CD4-positive, alpha-beta memory T cell (primary cell): ENCODE measurements at regions of chr10 and their contacts with region 1.

Region 1: DNA sequence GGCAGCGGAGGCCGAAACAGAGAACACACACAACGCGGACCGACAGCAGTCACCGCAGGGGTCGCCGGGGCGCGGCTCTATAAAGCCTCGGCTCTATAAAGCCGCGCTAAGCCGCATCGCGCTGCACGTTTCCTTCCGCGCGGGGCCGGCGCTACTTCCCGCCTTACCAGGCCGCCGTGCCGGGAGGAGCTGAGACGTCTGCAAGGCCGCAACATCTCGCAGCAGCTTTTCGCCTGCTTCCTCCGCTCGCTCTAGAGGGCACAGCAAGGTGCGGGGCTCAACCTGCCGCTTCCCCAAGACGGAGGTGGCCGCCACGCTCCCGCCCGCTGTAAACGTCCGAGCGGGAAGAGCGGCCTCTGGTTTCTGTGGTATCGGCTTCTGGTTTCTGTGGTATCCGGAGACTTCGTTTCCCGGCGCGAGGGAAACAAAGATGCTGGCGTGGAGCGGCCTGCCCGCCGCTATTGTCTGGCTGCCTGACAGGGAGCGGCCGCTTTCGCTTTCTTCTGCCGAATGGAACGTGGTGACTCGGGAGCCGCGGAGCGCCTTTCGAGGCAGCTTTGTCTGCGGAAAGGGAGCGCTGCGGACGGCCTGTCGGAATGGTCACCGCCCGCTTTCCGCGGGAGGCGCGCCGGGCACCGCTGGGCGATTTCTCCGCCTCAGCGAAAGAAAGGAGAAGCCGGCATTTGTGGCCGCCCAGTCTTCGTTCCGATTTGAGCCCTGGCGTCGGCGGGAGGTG is 91.8 kb downstream of the SPAG6 start:
- DNase-seq: peak; percentile 89 to 90 (median 89)
- H3K4me3 ChIP-seq: peak overlapping the region; percentile 82 to 87
- H3K4me3 Mint-ChIP-seq: peak overlapping the region; percentile 92 to 97 (median 96)
- H3K27ac ChIP-seq: peak overlapping the region; percentile 90
- H3K27ac Mint-ChIP-seq: peak overlapping the region; percentile 96 to 99 (median 98)
- H3K4me1 ChIP-seq: peaks cover 15% of the 10 kb centered on the region
- H3K4me1 Mint-ChIP-seq: peaks cover 24 to 53% (median 28%) of the 10 kb centered on the region in 4 donors
- H3K27me3 ChIP-seq: no peaks in the 10 kb centered on the region
- H3K27me3 Mint-ChIP-seq: no peaks in the 10 kb centered on the region

Region 2: GRCh38 chr10:21525367-21526183 is 911.5 kb before region 1 on chr10 and contains the start of gene SKIDA1:
- CTCF ChIA-PET with region 1: no interaction called
- POLR2A ChIA-PET with region 1: interaction called, 14 read pairs
- intact Hi-C with region 1: no loop called
- DNase-seq: peak; percentile 69 to 81 (median 75)
- H3K4me3 ChIP-seq: peak within 1 kb of the TSS; percentile 55 to 78
- H3K4me3 Mint-ChIP-seq: peak within 1 kb of the TSS; percentile 93 to 99 (median 96)
- H3K27ac ChIP-seq: peak within 1 kb of the TSS; percentile 63
- H3K27ac Mint-ChIP-seq: peak within 1 kb of the TSS; percentile 84 to 98 (median 98)
- H3K4me1 ChIP-seq: peaks cover 23% of the 10 kb centered on the region
- H3K4me1 Mint-ChIP-seq: peaks cover 9 to 36% (median 21%) of the 10 kb centered on the region in 4 donors
- H3K27me3 ChIP-seq: peaks cover 7% of the 10 kb centered on the region
- H3K27me3 Mint-ChIP-seq: peaks cover 9 to 12% of the 10 kb centered on the region in 2 donors
- total RNA-seq, gene SKIDA1: 0.39 to 0.73 TPM

Region 3: GRCh38 chr10:22010973-22011408 is 426.1 kb before region 1 on chr10:
- CTCF ChIA-PET with region 1: interaction called, 3 read pairs
- POLR2A ChIA-PET with region 1: interaction called, 13 read pairs
- intact Hi-C with region 1: no loop called
- DNase-seq: peak in 4 of 5 donors; percentile 38 to 51 (median 44)
- H3K4me3 ChIP-seq: no peak overlapping the region
- H3K4me3 Mint-ChIP-seq: no peak overlapping the region
- H3K27ac ChIP-seq: no peak overlapping the region
- H3K27ac Mint-ChIP-seq: no peak overlapping the region
- H3K4me1 ChIP-seq: no peaks in the 10 kb centered on the region
- H3K4me1 Mint-ChIP-seq: peaks cover 0 to 4% (median under 1%) of the 10 kb centered on the region in 4 donors
- H3K27me3 ChIP-seq: no peaks in the 10 kb centered on the region
- H3K27me3 Mint-ChIP-seq: peaks cover 5 to 7% of the 10 kb centered on the region in 2 donors

Region 4: DNA sequence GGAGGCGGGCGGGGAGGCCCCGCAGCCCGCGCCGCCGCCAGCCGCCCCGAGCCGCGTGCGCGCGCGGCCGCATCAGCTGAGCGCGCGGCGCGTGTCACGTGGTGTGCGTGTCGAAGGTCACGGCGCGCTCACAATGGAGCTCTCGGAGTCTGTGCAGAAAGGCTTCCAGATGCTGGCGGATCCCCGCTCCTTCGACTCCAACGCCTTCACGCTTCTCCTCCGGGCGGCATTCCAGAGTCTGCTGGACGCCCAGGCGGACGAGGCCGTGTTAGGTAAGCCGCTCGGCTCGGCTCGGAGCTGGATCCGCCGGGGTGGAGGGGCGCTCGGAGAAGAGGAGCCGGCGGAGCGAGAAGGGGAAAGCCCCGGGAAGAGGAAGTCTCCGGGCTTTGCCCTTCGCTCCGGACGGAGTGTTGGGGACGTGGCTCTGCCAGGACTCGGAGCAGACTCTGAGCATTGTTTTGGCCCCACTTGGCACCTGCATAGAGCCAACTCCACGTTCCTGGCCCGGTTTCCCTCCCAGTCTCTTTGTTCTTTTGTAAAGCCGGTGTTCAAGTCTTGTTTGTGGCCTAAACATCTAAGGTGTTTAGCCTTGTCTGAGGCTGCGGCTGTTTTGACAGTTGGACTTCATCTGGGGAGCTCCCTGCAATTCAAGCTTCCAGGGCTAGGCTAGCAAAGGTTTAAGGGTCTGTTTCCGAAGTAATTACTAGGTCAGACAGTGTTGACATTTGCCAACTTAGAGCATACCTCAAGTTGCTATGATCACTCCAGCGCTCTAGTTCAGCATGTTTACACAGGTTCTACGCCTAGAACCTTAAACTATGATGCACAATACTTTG is 120.5 kb before region 1 on chr10 and contains the start of gene COMMD3:
- CTCF ChIA-PET with region 1: interaction called, 6 read pairs
- POLR2A ChIA-PET with region 1: interaction called, 97 read pairs
- intact Hi-C with region 1: loop called (anchors 1 kb)
- DNase-seq: peak; percentile 78 to 86 (median 82)
- H3K4me3 ChIP-seq: peak within 1 kb of the TSS; percentile 77 to 95
- H3K4me3 Mint-ChIP-seq: peak within 1 kb of the TSS; percentile 94 to 99 (median 98)
- H3K27ac ChIP-seq: peak within 1 kb of the TSS; percentile 71
- H3K27ac Mint-ChIP-seq: peak within 1 kb of the TSS; percentile 89 to 98 (median 98)
- H3K4me1 ChIP-seq: peaks cover 37% of the 10 kb centered on the region
- H3K4me1 Mint-ChIP-seq: peaks cover 22 to 50% (median 29%) of the 10 kb centered on the region in 4 donors
- H3K27me3 ChIP-seq: no peaks in the 10 kb centered on the region
- H3K27me3 Mint-ChIP-seq: peaks cover 3 to 4% of the 10 kb centered on the region in 2 donors
- total RNA-seq, gene COMMD3: 67.9 to 68.5 TPM

Region 5: GRCh38 chr10:22379059-22379458 is 58.0 kb before region 1 on chr10:
- CTCF ChIA-PET with region 1: no interaction called
- POLR2A ChIA-PET with region 1: no interaction called
- intact Hi-C with region 1: no loop called
- DNase-seq: no peak
- H3K4me3 ChIP-seq: no peak overlapping the region
- H3K4me3 Mint-ChIP-seq: no peak overlapping the region
- H3K27ac ChIP-seq: no peak overlapping the region
- H3K27ac Mint-ChIP-seq: no peak overlapping the region
- H3K4me1 ChIP-seq: no peaks in the 10 kb centered on the region
- H3K4me1 Mint-ChIP-seq: peaks cover 0 to 4% (median 0%) of the 10 kb centered on the region in 4 donors
- H3K27me3 ChIP-seq: no peaks in the 10 kb centered on the region
- H3K27me3 Mint-ChIP-seq: peaks cover 5 to 14% of the 10 kb centered on the region in 2 donors

Region 6: DNA sequence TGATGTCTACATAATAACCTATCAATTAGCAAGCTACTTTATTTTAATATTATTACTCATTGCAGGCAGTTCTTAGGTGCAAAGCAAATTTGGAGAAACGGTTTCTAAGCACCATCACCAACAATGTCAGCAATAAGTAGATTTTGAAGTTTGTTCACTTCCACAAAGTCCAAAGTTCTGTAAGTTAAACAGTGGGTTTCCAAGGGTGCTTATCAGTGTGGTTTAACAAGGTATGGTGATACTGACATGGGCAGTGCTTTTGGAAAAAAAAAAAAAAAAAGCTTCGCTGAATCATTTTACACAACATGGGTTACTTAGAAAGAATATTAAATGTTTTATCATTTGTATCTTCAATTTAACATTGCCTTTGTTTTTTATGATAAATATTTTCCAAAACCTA is 10.0 kb after region 1 on chr10:
- CTCF ChIA-PET with region 1: no interaction called
- POLR2A ChIA-PET with region 1: interaction called, 20 read pairs
- intact Hi-C with region 1: no loop called
- DNase-seq: no peak
- H3K4me3 ChIP-seq: no peak overlapping the region
- H3K4me3 Mint-ChIP-seq: no peak overlapping the region
- H3K27ac ChIP-seq: no peak overlapping the region
- H3K27ac Mint-ChIP-seq: no peak overlapping the region
- H3K4me1 ChIP-seq: no peaks in the 10 kb centered on the region
- H3K4me1 Mint-ChIP-seq: no peaks in the 10 kb centered on the region
- H3K27me3 ChIP-seq: no peaks in the 10 kb centered on the region
- H3K27me3 Mint-ChIP-seq: peaks cover 6 to 16% of the 10 kb centered on the region in 2 donors

Region 7: DNA sequence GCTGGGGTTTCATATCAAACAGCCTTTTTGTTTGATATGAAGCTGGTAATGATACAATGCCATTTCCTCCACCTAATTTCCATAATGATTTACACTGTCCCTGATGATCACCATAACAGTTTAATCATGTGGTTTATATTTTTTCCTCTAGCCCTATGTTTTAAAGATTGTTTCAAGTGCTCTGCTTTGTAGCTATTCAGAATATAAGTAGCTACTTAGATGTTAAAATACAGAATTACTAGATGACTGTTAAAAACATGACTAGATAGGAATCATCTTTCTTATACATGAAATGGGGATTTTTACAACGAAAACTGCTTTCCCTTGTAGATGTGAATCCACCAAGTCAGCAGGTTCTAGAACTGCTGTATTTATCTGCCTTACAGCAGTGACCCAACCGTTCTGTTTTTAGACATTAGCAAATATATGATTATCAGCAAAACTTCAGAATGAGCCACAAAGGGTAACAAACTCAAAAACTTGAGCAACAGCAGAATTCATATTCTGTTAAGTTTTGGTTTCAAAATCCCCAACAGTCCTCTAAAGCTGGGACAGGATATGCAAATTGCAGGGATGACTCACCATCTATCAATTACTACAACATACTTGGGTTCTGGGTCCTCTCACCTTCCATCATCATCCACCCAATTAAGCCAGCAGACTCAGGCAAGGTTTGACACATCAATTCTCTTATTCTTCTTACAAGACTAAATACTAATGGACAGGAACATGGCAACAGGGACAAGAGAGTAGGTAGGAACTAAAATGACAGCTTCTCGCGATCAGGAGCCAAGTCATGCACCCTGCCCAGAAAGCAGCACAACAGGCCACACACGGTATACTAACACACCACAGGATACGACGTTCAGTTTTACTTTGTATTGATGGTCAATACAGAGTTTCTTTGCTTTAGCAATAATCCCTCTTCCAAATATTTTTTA is 193.5 kb after region 1 on chr10:
- CTCF ChIA-PET with region 1: no interaction called
- POLR2A ChIA-PET with region 1: interaction called, 16 read pairs
- intact Hi-C with region 1: no loop called
- DNase-seq: peak; percentile 66 to 86 (median 68)
- H3K4me3 ChIP-seq: peak overlapping the region; percentile 8 to 38
- H3K4me3 Mint-ChIP-seq: peak overlapping the region; percentile 78 to 86 (median 80)
- H3K27ac ChIP-seq: peak overlapping the region; percentile 64
- H3K27ac Mint-ChIP-seq: peak overlapping the region; percentile 87 to 99 (median 96)
- H3K4me1 ChIP-seq: peaks cover 99% of the 10 kb centered on the region
- H3K4me1 Mint-ChIP-seq: peaks cover 82 to 98% (median 94%) of the 10 kb centered on the region in 4 donors
- H3K27me3 ChIP-seq: no peaks in the 10 kb centered on the region
- H3K27me3 Mint-ChIP-seq: no peaks in the 10 kb centered on the region

Region 8: DNA sequence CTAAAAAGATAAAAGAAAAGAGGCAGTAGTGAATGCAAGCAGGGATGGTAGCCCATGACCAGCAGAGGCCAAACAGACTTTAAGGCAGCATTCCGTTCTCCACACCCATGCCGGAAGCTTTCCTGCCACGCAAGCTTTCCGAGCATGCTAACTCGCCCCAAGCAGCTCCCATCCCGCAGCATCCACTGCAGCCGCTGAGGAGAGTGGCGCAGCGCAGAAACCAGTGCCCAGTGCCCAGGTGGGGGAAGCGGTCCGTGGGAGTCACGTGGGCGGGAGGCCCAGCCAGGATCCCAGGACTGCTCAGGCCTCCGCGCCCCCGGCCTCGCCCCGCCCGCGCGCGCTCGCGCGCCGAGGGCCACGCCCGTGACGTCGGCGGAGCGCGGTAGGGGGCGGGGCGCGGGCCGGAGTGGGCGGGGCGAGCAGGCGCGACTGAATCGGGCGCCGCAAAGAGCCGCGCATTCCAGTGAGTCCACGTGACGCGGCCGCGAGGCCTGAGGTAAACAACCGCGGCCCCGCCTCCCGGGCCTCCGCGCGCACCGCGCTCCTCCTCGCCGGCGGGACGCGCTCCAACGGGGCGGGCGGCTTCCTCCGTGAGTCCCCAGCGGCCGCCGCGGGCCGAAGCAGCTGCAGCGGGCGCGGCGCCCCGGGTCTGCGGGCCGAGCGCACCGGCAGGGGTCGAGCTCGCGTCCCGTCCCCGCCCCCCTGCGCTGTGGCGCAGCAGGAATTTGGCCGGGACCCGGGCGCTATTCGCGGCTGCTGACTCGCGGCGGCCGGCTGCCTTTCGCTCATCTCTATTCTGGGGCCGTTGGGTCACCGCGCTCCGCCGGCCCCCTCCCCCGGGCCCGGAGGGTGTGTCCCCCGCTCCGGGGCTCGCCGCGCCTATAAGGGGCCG is 1001.7 kb after region 1 on chr10 and contains the start of gene OTUD1:
- CTCF ChIA-PET with region 1: no interaction called
- POLR2A ChIA-PET with region 1: interaction called, 9 read pairs
- intact Hi-C with region 1: loop called (anchors 2 kb)
- DNase-seq: peak; percentile 89 to 97 (median 95)
- H3K4me3 ChIP-seq: peak within 1 kb of the TSS; percentile 70 to 82
- H3K4me3 Mint-ChIP-seq: peak within 1 kb of the TSS; percentile 75 to 89 (median 84)
- H3K27ac ChIP-seq: peak within 1 kb of the TSS; percentile 79
- H3K27ac Mint-ChIP-seq: peak within 1 kb of the TSS; percentile 90 to 97 (median 94)
- H3K4me1 ChIP-seq: peaks cover 44% of the 10 kb centered on the region
- H3K4me1 Mint-ChIP-seq: peaks cover 30 to 44% (median 36%) of the 10 kb centered on the region in 4 donors
- H3K27me3 ChIP-seq: no peaks in the 10 kb centered on the region
- H3K27me3 Mint-ChIP-seq: no peaks in the 10 kb centered on the region
- total RNA-seq, gene OTUD1: 36.2 to 37.7 TPM